PC-9 (cell line): ENCODE measurements at regions of chr1 and their contacts with region 1.

Region 1: DNA sequence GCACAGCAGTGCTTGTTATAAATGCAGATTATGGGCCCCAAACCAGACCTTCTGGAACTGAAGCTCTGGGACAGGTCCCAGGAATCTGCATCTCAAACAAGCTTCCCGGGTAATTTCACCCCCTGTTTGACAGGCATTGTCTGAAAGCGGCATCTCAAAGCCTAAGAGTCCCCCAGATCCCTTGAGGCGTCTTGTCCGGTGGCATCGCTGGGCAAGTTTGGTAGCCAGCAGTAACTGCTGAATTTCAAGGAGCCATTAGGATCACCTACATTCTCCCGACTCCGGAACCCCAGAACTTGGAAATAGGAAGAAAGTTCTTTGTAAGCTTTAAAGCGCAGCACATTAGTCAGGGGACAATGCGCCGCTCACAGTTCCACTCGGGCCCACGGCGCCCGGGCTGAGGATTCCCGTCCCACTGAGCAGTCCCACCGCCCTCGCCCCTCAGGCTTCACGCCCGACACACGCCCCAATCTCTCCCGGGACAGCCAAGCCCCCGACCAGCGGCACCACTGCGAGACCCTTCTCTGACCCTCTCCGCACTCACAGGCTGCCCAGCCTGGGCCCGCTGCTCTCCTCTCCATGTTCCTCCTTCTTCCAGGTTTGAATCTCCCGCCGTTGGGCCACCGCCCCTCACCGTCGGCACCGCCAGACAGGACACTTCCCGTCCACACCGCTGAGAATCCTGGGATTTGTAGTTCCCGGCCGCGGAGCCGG is at the start of gene IQGAP3:
- DNase-seq: peak; percentile 79 to 85
- H3K4me3 ChIP-seq: peak within 1 kb of the TSS; percentile 77
- H3K27ac ChIP-seq: peak within 1 kb of the TSS; percentile 76
- H3K4me1 ChIP-seq: peaks cover 14% of the 10 kb centered on the region
- H3K27me3 ChIP-seq: no peaks in the 10 kb centered on the region
- CTCF ChIP-seq: no peak
- total RNA-seq, gene IQGAP3: 63.1 and 63.4 TPM in 2 replicates

Region 2: DNA sequence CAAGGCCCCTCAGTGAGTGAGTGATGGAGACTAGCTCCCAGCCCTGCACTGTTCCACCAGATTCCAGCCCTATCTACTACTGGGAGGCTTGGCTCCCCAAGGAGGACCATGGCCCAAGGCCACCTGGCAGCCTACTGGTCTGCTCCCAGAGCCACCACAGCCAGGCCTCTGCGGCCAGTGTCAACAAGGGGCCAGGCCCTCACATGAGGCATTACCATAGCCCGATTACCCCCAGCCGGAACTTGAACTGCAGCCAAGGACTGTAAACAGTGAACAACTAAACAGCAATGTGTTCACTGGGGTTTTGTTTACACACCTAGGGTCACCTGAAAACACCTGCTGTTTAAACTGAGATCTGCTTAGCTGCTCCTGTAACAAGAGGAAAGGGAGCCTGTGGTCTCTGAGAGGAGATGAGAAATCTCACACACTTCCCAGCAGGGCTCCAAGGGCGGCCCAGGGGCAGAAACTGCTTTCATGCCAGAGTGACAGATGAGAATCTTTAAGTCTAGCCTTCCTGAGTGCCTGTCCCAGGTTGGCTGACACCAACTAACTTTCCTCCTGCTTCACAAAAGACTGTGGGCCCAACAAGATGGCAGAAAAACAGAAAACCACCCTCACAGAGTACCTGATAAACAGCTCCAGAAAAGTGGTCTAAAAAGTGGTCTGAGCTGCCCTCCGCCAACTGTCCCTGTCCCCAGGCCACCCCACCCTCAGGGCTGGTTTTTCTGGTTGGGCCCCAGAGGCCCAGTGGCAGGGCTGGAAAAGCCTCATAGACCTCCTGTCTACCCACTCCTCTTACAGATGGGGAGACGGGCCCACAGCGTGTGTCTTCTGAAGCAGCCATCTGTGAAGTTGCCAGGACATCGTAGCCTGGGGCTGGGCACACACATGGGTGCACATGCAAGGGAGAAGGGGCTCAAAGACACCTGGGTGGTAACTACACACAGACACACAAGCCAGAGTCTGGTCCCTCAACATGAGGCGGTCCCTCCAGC is 100.3 kb before region 1 on chr1:
- CTCF ChIA-PET with region 1: no interaction called
- POLR2A ChIA-PET with region 1: no interaction called
- intact Hi-C with region 1: loop called (anchors 1 kb)
- DNase-seq: peak; percentile 90 to 100
- H3K4me3 ChIP-seq: peak overlapping the region; percentile 22; the same call in 1 of the 2 replicates
- H3K27ac ChIP-seq: peak overlapping the region; percentile 87
- H3K4me1 ChIP-seq: peaks cover 48% of the 10 kb centered on the region
- H3K27me3 ChIP-seq: no peaks in the 10 kb centered on the region
- CTCF ChIP-seq: no peak

Region 3: GRCh38 chr1:156601122-156601830 is 29.2 kb after region 1 on chr1 and contains the start of gene GPATCH4:
- CTCF ChIA-PET with region 1: no interaction called
- POLR2A ChIA-PET with region 1: no interaction called
- intact Hi-C with region 1: no loop called
- DNase-seq: peak; percentile 63 to 65
- H3K4me3 ChIP-seq: peak within 1 kb of the TSS; percentile 77
- H3K27ac ChIP-seq: peak within 1 kb of the TSS; percentile 70
- H3K4me1 ChIP-seq: peaks cover 16% of the 10 kb centered on the region
- H3K27me3 ChIP-seq: no peaks in the 10 kb centered on the region
- CTCF ChIP-seq: no peak
- total RNA-seq, gene GPATCH4: 17.5 and 17.6 TPM in 2 replicates